Esophagus muscularis mucosa (tissue), 4 donors: ENCODE measurements at regions of chr1 and their contacts with region 1.

Region 1: DNA sequence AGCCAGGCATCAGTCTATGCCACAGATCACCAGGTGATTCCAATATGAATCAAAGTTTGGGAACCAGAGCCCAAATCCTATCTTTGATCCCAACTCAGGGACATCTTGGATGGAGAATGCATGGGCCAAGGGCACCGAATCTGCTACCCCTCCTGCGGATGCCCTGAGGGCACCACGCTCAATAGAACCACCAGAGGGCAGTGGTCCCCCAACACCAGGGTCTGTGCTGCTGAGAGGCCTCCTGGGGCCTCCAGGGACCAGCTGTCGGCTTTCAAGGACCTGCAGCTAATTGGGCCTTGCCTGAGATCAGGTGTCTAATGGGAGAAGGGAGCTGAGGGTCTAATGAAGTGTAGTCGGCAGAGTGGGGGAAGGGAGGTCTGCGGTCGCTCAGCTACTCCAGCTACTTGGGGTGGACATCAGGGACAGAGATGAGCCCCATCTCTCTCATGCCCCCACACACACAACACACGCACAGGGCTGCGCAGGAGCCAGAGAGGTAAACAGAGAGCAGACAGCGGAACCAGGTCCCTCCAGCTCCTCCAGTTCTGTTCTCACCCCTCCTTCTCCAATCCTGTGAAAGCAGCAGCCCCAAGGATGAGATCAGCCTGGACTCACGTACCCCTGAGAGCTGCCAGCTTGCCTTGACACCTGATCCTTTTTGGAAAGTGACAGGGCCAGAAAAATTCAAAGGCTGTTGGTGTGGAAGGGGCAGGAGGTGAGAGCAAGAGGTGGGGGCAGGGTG is 34.9 kb upstream of the PPP1R15B start:
- DNase-seq: peak; percentile 93
- H3K4me3 ChIP-seq: no peak overlapping the region
- H3K27ac ChIP-seq: peak overlapping the region; percentile 4 to 55 (median 29)
- H3K4me1 ChIP-seq: peaks cover 20 to 50% (median 25%) of the 10 kb centered on the region in 4 donors
- H3K27me3 ChIP-seq: no peaks in the 10 kb centered on the region
- CTCF ChIP-seq: peak; percentile 83 to 86 (median 85)
- EP300 ChIP-seq: no peak
- POLR2A ChIP-seq: no peak

Region 2: GRCh38 chr1:204348722-204349121 is 97.8 kb before region 1 on chr1:
- intact Hi-C with region 1: no loop called
- DNase-seq: no peak
- H3K4me3 ChIP-seq: no peak overlapping the region
- H3K27ac ChIP-seq: peak overlapping the region; percentile 21 to 50 (median 49)
- H3K4me1 ChIP-seq: peaks cover 23 to 32% (median 26%) of the 10 kb centered on the region in 4 donors
- H3K27me3 ChIP-seq: peaks cover 0 to 43% (median 0%) of the 10 kb centered on the region in 4 donors
- CTCF ChIP-seq: no peak
- EP300 ChIP-seq: no peak
- POLR2A ChIP-seq: no peak

Region 3: GRCh38 chr1:204494281-204495077 is 47.9 kb after region 1 on chr1 and contains the start of gene PIK3C2B:
- intact Hi-C with region 1: loop called (anchors 2 kb)
- DNase-seq: no peak
- H3K4me3 ChIP-seq: peak within 1 kb of the TSS; percentile 71 to 87 (median 83)
- H3K27ac ChIP-seq: peak within 1 kb of the TSS; percentile 85 to 95 (median 92)
- H3K4me1 ChIP-seq: peaks cover 29 to 54% (median 42%) of the 10 kb centered on the region in 4 donors
- H3K27me3 ChIP-seq: no peaks in the 10 kb centered on the region
- CTCF ChIP-seq: peak; percentile 28 to 70 (median 39)
- EP300 ChIP-seq: no peak
- POLR2A ChIP-seq: peak; percentile 26
- total RNA-seq, gene PIK3C2B: 10.8 to 15.8 (median 13.6) TPM

Region 4: GRCh38 chr1:204503122-204503912 is 56.8 kb after region 1 on chr1:
- intact Hi-C with region 1: loop called (anchors 2 kb)
- DNase-seq: no peak
- H3K4me3 ChIP-seq: no peak overlapping the region
- H3K27ac ChIP-seq: no peak overlapping the region
- H3K4me1 ChIP-seq: peaks cover 7 to 25% (median 22%) of the 10 kb centered on the region in 4 donors
- H3K27me3 ChIP-seq: no peaks in the 10 kb centered on the region
- CTCF ChIP-seq: peak; percentile 83 to 84 (median 83)
- EP300 ChIP-seq: no peak
- POLR2A ChIP-seq: no peak